ENCODE measurements at regions of chrX and their contacts with region 1.

Region 1: GRCh38 chrX:30822068-30822681 is 66.9 kb downstream of the TAB3 start:
- DNase-seq: peak; percentile 34
- ATAC-seq: peak; percentile 94
- H3K4me3 ChIP-seq: no peak overlapping the region
- H3K27ac ChIP-seq: peak overlapping the region; percentile 37; the same call in 1 of the 2 replicates
- H3K4me1 ChIP-seq: no peaks in the 10 kb centered on the region; the same call in 1 of the 2 replicates
- H3K27me3 ChIP-seq: no peaks in the 10 kb centered on the region
- CTCF ChIP-seq: 0 out of 6 replicates have a peak, but pooled peaks of 1 of the 3 experiments have one; percentile 1
- EP300 ChIP-seq: no peak
- POLR2A ChIP-seq: no peak
- RAD21 ChIP-seq: peak; percentile 18; the same call in 1 of the 2 replicates

Region 2: GRCh38 chrX:30635630-30636029 is 186.5 kb before region 1 on chrX:
- CTCF ChIA-PET with region 1: interaction called, 3 read pairs
- POLR2A ChIA-PET with region 1: no interaction called
- RAD21 ChIA-PET with region 1: no interaction called
- SMC1A ChIA-PET with region 1: no interaction called
- in situ Hi-C with region 1: no loop called
- intact Hi-C with region 1: loop called (anchors 2 kb)
- DNase-seq: no peak
- ATAC-seq: peak; percentile 42; the same call in 2 of the 3 replicates
- H3K4me3 ChIP-seq: no peak overlapping the region
- H3K27ac ChIP-seq: no peak overlapping the region
- H3K4me1 ChIP-seq: no peaks in the 10 kb centered on the region
- H3K27me3 ChIP-seq: no peaks in the 10 kb centered on the region
- CTCF ChIP-seq: peak; percentile 27 to 43 (median 36); a peak in 4 of 6 replicates
- EP300 ChIP-seq: no peak
- POLR2A ChIP-seq: no peak
- RAD21 ChIP-seq: peak; percentile 55

Region 3: DNA sequence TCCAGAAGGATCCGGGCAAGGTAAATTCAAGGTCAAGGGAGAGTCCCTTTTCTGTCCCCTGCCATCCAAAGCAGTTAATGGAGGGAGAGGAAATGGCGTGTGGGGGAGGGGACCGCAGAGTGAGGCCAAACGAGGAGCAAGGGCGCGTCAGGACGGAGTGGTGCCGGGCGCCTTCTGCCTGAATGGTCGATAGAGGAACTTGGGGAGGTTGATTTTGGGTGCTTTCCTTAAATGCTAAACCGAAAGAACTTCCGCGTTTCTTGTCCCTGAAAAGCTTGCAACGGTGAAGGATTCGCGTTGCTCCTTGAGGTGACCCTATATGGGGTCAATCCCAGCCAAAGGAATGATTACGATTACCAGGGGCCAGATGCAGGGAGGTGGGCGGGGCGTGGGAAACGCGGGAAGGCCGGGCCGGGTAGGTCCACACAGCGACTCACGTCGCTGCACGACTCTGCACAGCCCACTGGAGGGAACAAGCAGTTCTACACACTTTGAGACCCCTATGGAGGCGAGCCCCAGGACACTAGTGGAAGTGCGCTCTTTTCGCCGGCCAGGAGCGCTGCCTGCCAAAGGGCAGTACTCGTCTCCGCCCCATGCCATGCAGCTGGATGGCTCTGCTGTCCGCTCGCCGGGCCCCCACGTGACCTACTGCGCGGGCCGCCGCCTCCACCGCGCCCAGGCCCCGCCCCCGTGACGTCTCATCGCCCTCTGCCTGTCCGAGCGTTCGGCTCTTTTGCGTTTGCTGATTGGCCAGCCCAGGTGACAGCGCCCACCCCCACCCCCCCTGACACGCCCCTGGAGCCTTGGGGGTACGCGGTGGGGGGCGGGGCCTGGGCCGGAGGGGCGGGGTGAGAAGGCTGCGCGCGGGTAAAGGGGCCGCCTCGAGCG is 169.4 kb before region 1 on chrX:
- CTCF ChIA-PET with region 1: no interaction called
- POLR2A ChIA-PET with region 1: no interaction called
- RAD21 ChIA-PET with region 1: no interaction called
- SMC1A ChIA-PET with region 1: no interaction called
- in situ Hi-C with region 1: no loop called
- intact Hi-C with region 1: loop called (anchors 5 kb)
- DNase-seq: peak; percentile 64
- ATAC-seq: peak; percentile 87
- H3K4me3 ChIP-seq: peak overlapping the region; percentile 51; the same call in 1 of the 2 replicates
- H3K27ac ChIP-seq: peak overlapping the region; percentile 83
- H3K4me1 ChIP-seq: no peaks in the 10 kb centered on the region; the same call in 1 of the 2 replicates
- H3K27me3 ChIP-seq: no peaks in the 10 kb centered on the region
- CTCF ChIP-seq: no peak
- EP300 ChIP-seq: no peak
- POLR2A ChIP-seq: peak; percentile 84
- RAD21 ChIP-seq: no peak

Region 4: GRCh38 chrX:30779453-30780030 is 42.6 kb before region 1 on chrX:
- CTCF ChIA-PET with region 1: no interaction called
- POLR2A ChIA-PET with region 1: no interaction called
- RAD21 ChIA-PET with region 1: no interaction called
- SMC1A ChIA-PET with region 1: no interaction called
- in situ Hi-C with region 1: loop called (anchors 5 kb)
- intact Hi-C with region 1: no loop called
- DNase-seq: no peak
- ATAC-seq: no peak
- H3K4me3 ChIP-seq: no peak overlapping the region
- H3K27ac ChIP-seq: no peak overlapping the region
- H3K4me1 ChIP-seq: no peaks in the 10 kb centered on the region
- H3K27me3 ChIP-seq: no peaks in the 10 kb centered on the region
- CTCF ChIP-seq: no peak
- EP300 ChIP-seq: no peak
- POLR2A ChIP-seq: no peak
- RAD21 ChIP-seq: no peak

Measured in GM12878 (cell line).